ENCODE measurements at regions of chr6 and their contacts with region 1.

Region 1: GRCh38 chr6:95249175-95249574 is 328.2 kb upstream of the MANEA start:
- DNase-seq: no peak
- CTCF ChIP-seq: no peak

Region 2: DNA sequence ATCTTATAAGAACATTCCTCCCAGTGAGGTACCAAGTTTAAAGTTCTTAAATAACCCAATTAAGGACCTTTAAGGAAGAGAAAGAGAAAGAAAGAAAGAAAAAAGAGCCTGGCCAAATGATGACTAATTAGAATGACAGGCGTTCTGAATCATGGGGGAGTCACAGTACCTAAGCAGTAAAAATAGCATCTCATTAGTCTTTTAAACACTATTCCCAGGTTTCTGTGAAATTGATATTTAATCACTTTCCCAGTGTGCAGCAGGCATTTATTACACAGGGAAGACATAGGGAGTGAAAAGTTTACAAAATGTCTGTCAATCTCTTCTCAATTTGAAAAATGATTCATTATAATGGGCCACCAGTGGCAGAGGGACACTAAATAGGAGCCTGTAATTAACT is 76.7 kb after region 1 on chr6:
- in situ Hi-C with region 1: loop called (anchors 25 kb)
- DNase-seq: no peak
- CTCF ChIP-seq: no peak

Measured in GM13977 (cell line).